Astrocyte of the cerebellum (primary cell): ENCODE measurements at regions of chr22 and their contacts with region 1.

Region 1: GRCh38 chr22:18077639-18078328 is at the start of gene PEX26:
- DNase-seq: peak; percentile 90
- H3K4me3 ChIP-seq: peak within 1 kb of the TSS; percentile 86
- CTCF ChIP-seq: no peak

Region 2: GRCh38 chr22:17773606-17774205 is 304.1 kb before region 1 on chr22:
- in situ Hi-C with region 1: no loop called
- DNase-seq: no peak
- H3K4me3 ChIP-seq: peak overlapping the region; percentile 55
- CTCF ChIP-seq: no peak

Region 3: DNA sequence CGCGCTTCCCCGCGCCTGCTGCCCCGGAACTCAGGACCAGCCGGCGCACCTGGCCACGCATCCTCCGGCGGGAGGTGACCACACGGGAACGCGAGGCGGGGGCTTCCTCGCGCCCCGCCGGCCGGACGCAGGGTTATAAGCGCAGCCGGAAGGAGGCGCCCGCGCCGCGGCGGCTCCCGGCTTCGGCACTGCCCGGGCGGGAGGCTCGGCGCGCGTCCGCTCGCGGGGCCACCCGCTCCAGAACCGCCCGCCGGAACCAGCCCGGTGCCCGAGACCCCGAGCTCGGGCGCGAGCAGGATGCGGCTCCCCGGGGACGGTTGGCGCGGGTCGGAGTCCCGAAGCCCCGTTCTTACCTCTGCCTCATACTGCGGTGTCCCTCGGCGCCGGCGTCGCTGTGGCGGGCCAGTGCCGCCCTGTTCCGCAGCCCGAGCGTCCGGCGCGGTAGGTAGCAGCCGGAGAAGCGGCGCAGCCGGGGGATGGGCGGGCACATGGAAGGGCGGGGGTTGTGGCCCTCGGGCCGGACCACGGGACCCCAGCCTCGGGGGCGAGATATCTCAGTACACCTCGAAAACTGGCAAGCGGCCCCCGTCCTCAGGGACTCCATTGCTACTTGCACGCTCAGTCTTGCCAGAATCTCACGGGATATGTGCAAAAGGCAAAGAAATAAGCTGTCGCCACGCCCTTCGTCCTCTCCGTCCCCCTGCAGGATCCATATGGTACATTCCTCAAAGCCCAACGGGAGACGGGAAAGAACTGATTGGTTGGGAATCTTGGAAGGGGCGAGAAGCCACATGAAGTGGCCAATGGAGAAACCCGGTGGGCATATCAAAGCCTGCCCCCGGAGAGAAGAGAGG is 76.5 kb before region 1 on chr22:
- in situ Hi-C with region 1: loop called (anchors 5 kb)
- DNase-seq: peak; percentile 98
- H3K4me3 ChIP-seq: peak overlapping the region; percentile 76
- CTCF ChIP-seq: peak; percentile 40